WTC11 (cell line): ENCODE measurements at regions of chr12 and their contacts with region 1.

Region 1: DNA sequence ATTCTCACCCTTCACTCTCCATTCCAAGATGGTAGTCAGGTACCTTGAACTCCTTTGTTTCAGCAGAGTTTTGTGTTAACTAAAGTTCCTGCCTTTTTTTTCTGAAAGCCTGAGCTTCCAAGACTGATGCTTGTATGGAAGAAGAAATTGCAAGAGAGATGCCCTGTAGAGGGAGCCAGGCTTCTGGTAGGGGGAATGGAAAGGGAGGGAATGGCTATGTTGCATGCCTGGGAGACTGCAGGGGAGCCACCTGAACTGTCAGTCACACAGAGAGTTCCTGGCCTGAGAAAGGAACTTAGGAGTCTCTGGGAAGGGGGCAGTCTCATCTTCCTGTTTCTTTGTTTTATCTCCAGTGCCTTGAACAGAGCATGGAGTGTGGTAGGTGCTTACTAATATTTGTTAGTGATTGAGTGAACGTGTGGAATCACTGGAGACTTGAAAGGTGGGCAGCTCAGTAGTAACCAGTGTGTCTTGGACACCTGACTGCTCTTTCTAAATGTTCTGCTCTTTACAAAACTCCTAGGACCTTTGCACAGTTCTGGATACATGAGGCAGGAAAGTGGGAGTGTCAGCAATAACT is 132.2 kb downstream of the ANO4 start:
- DNase-seq: peak; percentile 66
- ATAC-seq: peak; percentile 100
- H3K4me3 Mint-ChIP-seq: no peak overlapping the region
- H3K27ac Mint-ChIP-seq: peak overlapping the region; percentile 7; the same call in 1 of the 2 replicates
- H3K4me1 Mint-ChIP-seq: peaks cover 19% of the 10 kb centered on the region
- H3K27me3 Mint-ChIP-seq: no peaks in the 10 kb centered on the region
- CTCF ChIP-seq: no peak

Region 2: DNA sequence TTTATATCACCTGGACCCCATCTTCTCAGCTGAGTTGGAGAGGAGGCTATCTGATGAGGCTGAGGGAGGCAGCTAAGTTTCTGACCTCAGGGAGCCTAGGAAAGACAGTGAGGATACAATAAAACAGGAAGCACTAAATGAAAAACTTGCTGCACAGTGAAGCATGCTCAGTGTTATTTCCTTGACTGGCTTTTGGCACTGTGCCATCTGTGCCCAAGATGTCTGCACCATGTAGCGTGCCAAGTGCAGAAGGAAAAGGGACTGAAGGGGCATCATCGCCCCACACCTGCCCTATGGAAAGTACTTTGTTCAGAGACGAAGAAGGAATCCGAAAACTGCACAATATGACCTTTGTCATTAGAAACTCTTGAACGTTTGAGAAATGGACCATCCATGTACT is 29.5 kb before region 1 on chr12:
- CTCF ChIA-PET with region 1: no interaction called
- POLR2A ChIA-PET with region 1: no interaction called
- DNase-seq: no peak
- ATAC-seq: no peak
- H3K4me3 Mint-ChIP-seq: no peak overlapping the region
- H3K27ac Mint-ChIP-seq: no peak overlapping the region
- H3K4me1 Mint-ChIP-seq: no peaks in the 10 kb centered on the region
- H3K27me3 Mint-ChIP-seq: no peaks in the 10 kb centered on the region
- CTCF ChIP-seq: no peak

Region 3: GRCh38 chr12:100908501-100908900 is 18.3 kb before region 1 on chr12:
- CTCF ChIA-PET with region 1: interaction called, 5 read pairs
- POLR2A ChIA-PET with region 1: interaction called, 12 read pairs
- DNase-seq: no peak
- ATAC-seq: no peak
- H3K4me3 Mint-ChIP-seq: no peak overlapping the region
- H3K27ac Mint-ChIP-seq: no peak overlapping the region
- H3K4me1 Mint-ChIP-seq: no peaks in the 10 kb centered on the region
- H3K27me3 Mint-ChIP-seq: no peaks in the 10 kb centered on the region
- CTCF ChIP-seq: no peak

Region 4: GRCh38 chr12:101001669-101002068 is 74.9 kb after region 1 on chr12:
- CTCF ChIA-PET with region 1: no interaction called
- POLR2A ChIA-PET with region 1: no interaction called
- DNase-seq: no peak
- ATAC-seq: no peak
- H3K4me3 Mint-ChIP-seq: no peak overlapping the region
- H3K27ac Mint-ChIP-seq: no peak overlapping the region
- H3K4me1 Mint-ChIP-seq: no peaks in the 10 kb centered on the region
- H3K27me3 Mint-ChIP-seq: no peaks in the 10 kb centered on the region
- CTCF ChIP-seq: no peak